HCT116 (cell line): ENCODE measurements at regions of chr6 and their contacts with region 1.

Region 1: GRCh38 chr6:90285611-90286381 is 10.8 kb downstream of the BACH2 start:
- DNase-seq: peak; percentile 76
- ATAC-seq: peak; percentile 77
- H3K4me3 ChIP-seq: peak overlapping the region; percentile 46 to 61
- H3K27ac ChIP-seq: peak overlapping the region; percentile 65
- H3K4me1 ChIP-seq: peaks cover 23 to 40% of the 10 kb centered on the region in 2 experiments
- H3K27me3 ChIP-seq: no peaks in the 10 kb centered on the region
- CTCF ChIP-seq: no peak
- POLR2A ChIP-seq: no peak
- RAD21 ChIP-seq: peak; percentile 20; the same call in 1 of the 2 replicates

Region 2: DNA sequence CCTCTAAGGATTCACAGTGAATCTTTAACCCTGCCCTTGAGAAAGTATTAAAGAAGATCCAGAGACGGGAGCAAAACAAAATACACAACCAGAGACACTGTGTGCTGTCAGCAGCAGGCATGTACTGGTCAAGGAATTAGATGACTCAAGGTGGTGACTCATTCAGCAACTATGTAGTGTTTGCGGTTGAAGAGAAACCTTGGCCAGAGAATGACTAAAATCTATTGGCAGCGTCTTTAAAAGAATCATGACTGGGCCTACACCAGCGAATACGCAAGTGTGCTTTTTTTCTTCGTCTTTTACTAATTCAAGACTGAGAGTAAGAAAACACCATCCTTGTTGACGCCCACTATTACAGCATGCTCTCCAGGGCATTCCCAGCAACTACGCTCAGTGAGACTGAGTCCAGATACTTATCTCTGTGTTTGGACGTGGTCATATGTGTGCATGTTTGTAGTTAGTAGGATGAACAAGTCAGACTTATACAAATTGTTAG is 83.3 kb after region 1 on chr6:
- CTCF ChIA-PET with region 1: interaction called, 3 read pairs
- POLR2A ChIA-PET with region 1: no interaction called
- RAD21 ChIA-PET with region 1: no interaction called
- intact Hi-C with region 1: loop called (anchors 2 kb)
- DNase-seq: peak; percentile 99
- ATAC-seq: peak; percentile 98
- H3K4me3 ChIP-seq: peak overlapping the region in 1 of 2 experiments; percentile 38; a peak in 2 of 4 replicates
- H3K27ac ChIP-seq: no peak overlapping the region
- H3K4me1 ChIP-seq: peaks cover 14 to 27% of the 10 kb centered on the region in 2 experiments
- H3K27me3 ChIP-seq: no peaks in the 10 kb centered on the region
- CTCF ChIP-seq: no peak
- POLR2A ChIP-seq: no peak
- RAD21 ChIP-seq: peak; percentile 44

Region 3: DNA sequence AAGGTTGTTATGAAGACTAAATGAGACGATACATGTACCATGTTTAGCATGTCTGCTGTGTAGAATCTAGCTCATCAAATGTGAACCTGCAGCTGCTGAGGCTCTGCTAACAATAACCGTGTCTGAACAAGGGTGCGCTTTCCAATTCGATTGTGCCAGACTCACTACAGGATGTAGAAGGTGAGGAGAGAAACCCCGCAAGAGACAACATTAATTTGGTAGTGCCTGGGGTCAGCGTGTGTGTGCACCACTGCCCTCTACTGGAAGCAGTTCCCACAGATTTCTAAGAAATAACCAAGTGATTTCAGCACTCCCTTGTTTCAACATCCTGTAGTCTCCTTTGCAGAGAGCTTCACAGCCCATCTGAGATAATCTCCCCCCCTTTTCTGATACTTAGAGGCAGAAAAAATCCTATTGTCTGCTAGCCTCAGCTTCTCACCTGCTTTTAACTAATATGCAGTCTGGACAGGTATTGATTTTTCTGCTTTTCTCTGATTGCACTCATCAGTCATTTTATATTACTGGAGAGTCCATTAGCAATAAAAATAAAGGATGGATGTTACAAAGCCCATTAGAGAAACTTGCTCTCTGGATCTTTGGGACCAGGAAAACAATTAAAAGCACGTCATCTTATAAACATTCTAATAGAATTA is 107.6 kb after region 1 on chr6:
- CTCF ChIA-PET with region 1: interaction called, 3 read pairs
- POLR2A ChIA-PET with region 1: interaction called, 3 read pairs
- RAD21 ChIA-PET with region 1: no interaction called
- intact Hi-C with region 1: loop called (anchors 1 kb)
- DNase-seq: peak; percentile 41
- ATAC-seq: peak; percentile 95
- H3K4me3 ChIP-seq: no peak overlapping the region
- H3K27ac ChIP-seq: no peak overlapping the region
- H3K4me1 ChIP-seq: peaks cover 0 to 11% of the 10 kb centered on the region in 2 experiments; a peak in 1 of 4 replicates
- H3K27me3 ChIP-seq: no peaks in the 10 kb centered on the region
- CTCF ChIP-seq: peak; percentile 62 to 83 (median 76); a peak in 5 of 6 replicates
- POLR2A ChIP-seq: no peak
- RAD21 ChIP-seq: peak; percentile 86

Region 4: DNA sequence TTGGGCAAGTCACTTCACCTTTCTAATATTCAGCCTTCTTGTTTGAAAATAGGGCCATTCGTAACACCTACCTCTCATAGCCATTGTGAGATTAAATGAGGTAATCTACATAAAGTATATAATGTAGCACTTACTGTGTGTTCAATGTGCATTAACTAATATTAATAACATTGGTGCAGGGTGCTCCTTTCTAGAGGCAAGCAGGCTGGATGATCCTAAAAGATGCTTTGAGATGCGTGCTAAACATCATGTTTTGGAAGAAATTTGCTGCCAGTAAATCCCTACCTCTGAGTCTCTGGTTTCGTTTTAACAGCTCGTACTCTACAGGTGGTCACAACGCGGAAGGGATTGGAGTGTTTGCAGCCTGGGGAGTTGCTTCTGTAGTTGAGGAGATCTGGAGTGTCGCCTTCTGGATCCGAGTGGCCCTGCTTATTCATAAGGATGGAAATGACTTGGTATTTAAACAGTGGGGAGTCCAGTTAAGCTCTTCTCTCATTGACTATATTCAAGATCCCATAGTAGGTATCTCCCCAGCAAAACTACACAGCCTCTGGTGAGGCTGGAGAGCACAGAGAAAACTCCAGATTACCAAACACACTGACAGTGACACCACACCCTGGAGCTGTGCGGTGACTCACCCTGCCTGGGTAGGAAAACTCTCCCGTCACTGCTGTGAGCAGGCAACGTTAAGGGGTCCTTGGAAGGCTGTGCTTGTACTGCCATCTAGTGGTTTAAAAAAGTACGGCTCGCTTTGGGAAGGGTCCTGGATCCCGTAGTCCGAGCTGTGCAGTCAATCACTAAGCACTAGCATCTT is 193.2 kb after region 1 on chr6:
- CTCF ChIA-PET with region 1: interaction called, 10 read pairs
- POLR2A ChIA-PET with region 1: no interaction called
- RAD21 ChIA-PET with region 1: interaction called in 1 of 2 experiments, 4 read pairs
- intact Hi-C with region 1: loop called (anchors 1 kb)
- DNase-seq: peak; percentile 87
- ATAC-seq: peak; percentile 96
- H3K4me3 ChIP-seq: no peak overlapping the region
- H3K27ac ChIP-seq: no peak overlapping the region
- H3K4me1 ChIP-seq: peaks cover 0 to 11% of the 10 kb centered on the region in 2 experiments; a peak in 2 of 4 replicates
- H3K27me3 ChIP-seq: no peaks in the 10 kb centered on the region
- CTCF ChIP-seq: peak; percentile 79 to 91 (median 87)
- POLR2A ChIP-seq: no peak
- RAD21 ChIP-seq: peak; percentile 99